Naive thymus-derived CD4-positive, alpha-beta T cell (primary cell): ENCODE measurements at regions of chr12 and their contacts with region 1.

Region 1: GRCh38 chr12:12736759-12737676 is 19.9 kb downstream of the CDKN1B start:
- DNase-seq: peak in 7 of 9 donors; percentile 32 to 59 (median 39)
- ATAC-seq: peak; percentile 93
- H3K4me3 ChIP-seq: peak overlapping the region; percentile 28
- H3K4me3 Mint-ChIP-seq: peak overlapping the region; percentile 53 to 82 (median 68)
- H3K27ac ChIP-seq: peak overlapping the region; percentile 54
- H3K27ac Mint-ChIP-seq: peak overlapping the region; percentile 75 to 93 (median 85)
- H3K4me1 ChIP-seq: peaks cover 9 to 33% of the 10 kb centered on the region in 2 donors
- H3K4me1 Mint-ChIP-seq: peaks cover 21 to 65% (median 35%) of the 10 kb centered on the region in 7 donors
- H3K27me3 ChIP-seq: no peaks in the 10 kb centered on the region
- H3K27me3 Mint-ChIP-seq: no peaks in the 10 kb centered on the region

Region 2: GRCh38 chr12:12645485-12645884 is 91.5 kb before region 1 on chr12:
- CTCF ChIA-PET with region 1: interaction called, 60 read pairs
- POLR2A ChIA-PET with region 1: interaction called, 4 read pairs
- intact Hi-C with region 1: loop called (anchors 1 kb)
- DNase-seq: peak in 8 of 9 donors; percentile 24 to 76 (median 62)
- ATAC-seq: peak; percentile 80
- H3K4me3 ChIP-seq: no peak overlapping the region
- H3K4me3 Mint-ChIP-seq: no peak overlapping the region
- H3K27ac ChIP-seq: no peak overlapping the region
- H3K27ac Mint-ChIP-seq: peak overlapping the region in 3 of 9 donors; percentile 42 to 79 (median 67)
- H3K4me1 ChIP-seq: no peaks in the 10 kb centered on the region
- H3K4me1 Mint-ChIP-seq: peaks cover 0 to 11% (median 3%) of the 10 kb centered on the region in 7 donors
- H3K27me3 ChIP-seq: no peaks in the 10 kb centered on the region
- H3K27me3 Mint-ChIP-seq: no peaks in the 10 kb centered on the region

Region 3: DNA sequence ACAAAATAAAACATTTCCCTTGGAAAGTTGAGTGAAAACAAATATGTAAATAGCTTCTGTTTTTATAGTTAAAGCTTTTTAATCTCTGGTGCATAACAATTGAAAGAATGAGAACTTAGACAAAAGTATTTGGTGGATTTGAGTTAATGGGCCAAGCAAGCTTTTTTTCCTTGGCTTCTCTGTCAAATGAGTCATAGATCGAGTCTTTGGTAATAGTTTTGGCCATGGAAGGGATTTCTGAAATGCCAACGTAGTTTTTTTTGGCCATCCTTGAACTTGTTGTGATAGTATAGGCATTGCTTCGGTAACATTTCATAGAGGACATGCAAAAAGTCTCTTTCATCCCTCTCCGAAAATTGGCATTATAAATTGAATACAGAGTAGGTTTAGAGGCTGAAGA is 75.9 kb before region 1 on chr12:
- CTCF ChIA-PET with region 1: interaction called, 8 read pairs
- POLR2A ChIA-PET with region 1: no interaction called
- intact Hi-C with region 1: loop called in 1 of 2 experiments (anchors 1 kb)
- DNase-seq: no peak
- ATAC-seq: no peak
- H3K4me3 ChIP-seq: no peak overlapping the region
- H3K4me3 Mint-ChIP-seq: no peak overlapping the region
- H3K27ac ChIP-seq: no peak overlapping the region
- H3K27ac Mint-ChIP-seq: peak overlapping the region in 1 of 9 donors; percentile 82
- H3K4me1 ChIP-seq: no peaks in the 10 kb centered on the region
- H3K4me1 Mint-ChIP-seq: peaks cover 0 to 3% (median under 1%) of the 10 kb centered on the region in 7 donors
- H3K27me3 ChIP-seq: no peaks in the 10 kb centered on the region
- H3K27me3 Mint-ChIP-seq: no peaks in the 10 kb centered on the region

Region 4: GRCh38 chr12:12724661-12725545 is 12.1 kb before region 1 on chr12:
- CTCF ChIA-PET with region 1: interaction called, 27 read pairs
- POLR2A ChIA-PET with region 1: interaction called, 311 read pairs
- intact Hi-C with region 1: loop called (anchors 1 kb)
- DNase-seq: peak; percentile 78 to 97 (median 92)
- ATAC-seq: peak; percentile 77
- H3K4me3 ChIP-seq: peak overlapping the region; percentile 53
- H3K4me3 Mint-ChIP-seq: peak overlapping the region; percentile 87 to 98 (median 94)
- H3K27ac ChIP-seq: peak overlapping the region; percentile 99
- H3K27ac Mint-ChIP-seq: peak overlapping the region; percentile 96 to 99 (median 97)
- H3K4me1 ChIP-seq: peaks cover 28% of the 10 kb centered on the region in 2 donors
- H3K4me1 Mint-ChIP-seq: peaks cover 23 to 64% (median 56%) of the 10 kb centered on the region in 7 donors
- H3K27me3 ChIP-seq: no peaks in the 10 kb centered on the region
- H3K27me3 Mint-ChIP-seq: peaks cover 0 to 7% (median 0%) of the 10 kb centered on the region in 5 donors

Region 5: GRCh38 chr12:13534645-13535398 is 797.8 kb after region 1 on chr12:
- CTCF ChIA-PET with region 1: no interaction called
- POLR2A ChIA-PET with region 1: no interaction called
- intact Hi-C with region 1: no loop called
- DNase-seq: peak in 1 of 9 donors; percentile 46
- ATAC-seq: no peak
- H3K4me3 ChIP-seq: no peak overlapping the region
- H3K4me3 Mint-ChIP-seq: no peak overlapping the region
- H3K27ac ChIP-seq: no peak overlapping the region
- H3K27ac Mint-ChIP-seq: no peak overlapping the region
- H3K4me1 ChIP-seq: no peaks in the 10 kb centered on the region
- H3K4me1 Mint-ChIP-seq: peaks cover 0 to 2% (median 0%) of the 10 kb centered on the region in 7 donors
- H3K27me3 ChIP-seq: no peaks in the 10 kb centered on the region
- H3K27me3 Mint-ChIP-seq: peaks cover 6 to 28% (median 13%) of the 10 kb centered on the region in 5 donors